ENCODE measurements at regions of chr9 and their contacts with region 1.

Region 1: DNA sequence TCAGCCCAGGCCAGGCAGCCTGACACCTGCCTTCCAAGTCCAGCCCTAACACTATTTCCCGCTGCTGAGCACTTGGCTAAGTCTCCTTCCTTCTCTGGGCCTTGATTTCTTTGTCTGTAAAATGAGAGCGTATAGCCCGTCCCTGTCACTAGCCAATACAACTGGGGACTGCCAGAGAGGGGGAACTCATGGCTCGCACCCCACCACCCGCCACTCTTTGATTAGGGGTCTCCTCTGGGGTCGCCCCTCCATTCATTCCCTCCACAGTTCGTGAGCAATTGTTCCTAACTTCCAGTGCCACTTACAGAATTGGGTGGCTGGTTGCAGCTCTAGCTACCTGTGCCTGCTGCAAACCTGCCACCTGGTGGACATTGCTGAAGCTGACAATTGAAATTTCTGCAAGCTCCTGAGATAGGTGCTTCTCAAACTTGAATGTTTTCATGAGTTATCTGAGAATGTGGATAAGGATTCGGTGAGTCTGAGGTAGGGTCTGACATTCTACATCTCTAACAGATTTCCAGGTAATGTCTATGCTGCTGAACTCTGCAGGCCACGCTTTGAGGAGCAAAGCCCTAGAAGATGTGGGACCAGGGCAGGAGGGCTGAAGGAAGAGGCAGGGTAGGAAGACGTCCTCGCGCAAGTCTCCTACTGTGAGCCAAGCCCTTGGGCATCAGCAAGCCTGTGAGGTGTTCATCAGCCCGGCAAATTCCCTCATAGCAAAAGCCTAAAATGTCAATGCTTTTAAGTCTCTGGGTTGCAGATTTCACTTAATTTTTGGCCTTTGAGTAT is 13.3 kb upstream of the RECK start:
- DNase-seq: peak; percentile 31 to 80 (median 56)
- ATAC-seq: peak; percentile 73 to 80 (median 76)
- H3K4me3 ChIP-seq: no peak overlapping the region
- H3K4me3 Mint-ChIP-seq: no peak overlapping the region
- H3K27ac ChIP-seq: no peak overlapping the region
- H3K27ac Mint-ChIP-seq: peak overlapping the region in 1 of 2 donors; percentile 8
- H3K4me1 ChIP-seq: peaks cover 0 to 2% of the 10 kb centered on the region in 2 experiments
- H3K4me1 Mint-ChIP-seq: peaks cover 0 to 6% (median 1%) of the 10 kb centered on the region in 3 donors
- H3K27me3 ChIP-seq: no peaks in the 10 kb centered on the region
- H3K27me3 Mint-ChIP-seq: peaks cover 6 to 10% of the 10 kb centered on the region in 2 donors

Region 2: GRCh38 chr9:35903049-35903448 is 120.4 kb before region 1 on chr9:
- CTCF ChIA-PET with region 1: interaction called, 6 to 16 read pairs
- POLR2A ChIA-PET with region 1: no interaction called
- DNase-seq: peak in 15 of 35 experiments; percentile 13 to 75 (median 26)
- ATAC-seq: peak; percentile 58 to 66 (median 59)
- H3K4me3 ChIP-seq: no peak overlapping the region
- H3K4me3 Mint-ChIP-seq: no peak overlapping the region
- H3K27ac ChIP-seq: no peak overlapping the region
- H3K27ac Mint-ChIP-seq: no peak overlapping the region
- H3K4me1 ChIP-seq: peaks cover 8 to 33% of the 10 kb centered on the region in 2 experiments
- H3K4me1 Mint-ChIP-seq: peaks cover 23 to 40% (median 28%) of the 10 kb centered on the region in 3 donors
- H3K27me3 ChIP-seq: peaks cover 0 to 7% of the 10 kb centered on the region in 2 experiments
- H3K27me3 Mint-ChIP-seq: peaks cover 4 to 8% of the 10 kb centered on the region in 2 donors

Region 3: GRCh38 chr9:35954942-35955546 is 68.4 kb before region 1 on chr9:
- CTCF ChIA-PET with region 1: interaction called, 11 to 17 read pairs
- POLR2A ChIA-PET with region 1: no interaction called
- DNase-seq: peak in 32 of 35 experiments; percentile 6 to 82 (median 36)
- ATAC-seq: peak; percentile 76 to 80 (median 78)
- H3K4me3 ChIP-seq: no peak overlapping the region
- H3K4me3 Mint-ChIP-seq: no peak overlapping the region
- H3K27ac ChIP-seq: no peak overlapping the region
- H3K27ac Mint-ChIP-seq: peak overlapping the region in 1 of 2 donors; percentile 49
- H3K4me1 ChIP-seq: no peaks in the 10 kb centered on the region
- H3K4me1 Mint-ChIP-seq: peaks cover 4 to 8% (median 6%) of the 10 kb centered on the region in 3 donors
- H3K27me3 ChIP-seq: peaks cover 0 to 11% of the 10 kb centered on the region in 2 experiments
- H3K27me3 Mint-ChIP-seq: peaks cover 0 to 18% of the 10 kb centered on the region in 2 donors

Region 4: DNA sequence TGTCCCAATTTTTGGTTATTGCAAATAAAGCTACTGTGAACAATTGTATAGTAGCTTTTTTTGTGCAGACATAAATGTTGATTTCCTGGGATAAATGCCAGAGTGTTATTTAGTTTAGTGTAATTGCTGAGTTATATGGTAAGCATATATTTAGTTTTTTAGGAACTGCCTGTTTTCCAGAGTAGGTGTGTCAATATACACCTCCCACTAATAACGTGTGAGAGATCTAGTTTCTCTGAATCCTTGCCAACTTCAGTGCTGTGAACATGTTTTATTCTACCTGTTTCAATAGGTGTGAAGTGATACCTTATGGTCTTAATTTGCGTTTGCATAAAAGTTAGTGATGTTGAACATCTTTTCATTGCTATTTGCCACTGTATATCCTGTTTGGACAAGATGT is 56.4 kb before region 1 on chr9:
- CTCF ChIA-PET with region 1: no interaction called
- POLR2A ChIA-PET with region 1: no interaction called
- DNase-seq: no peak
- ATAC-seq: no peak
- H3K4me3 ChIP-seq: no peak overlapping the region
- H3K4me3 Mint-ChIP-seq: no peak overlapping the region
- H3K27ac ChIP-seq: no peak overlapping the region
- H3K27ac Mint-ChIP-seq: no peak overlapping the region
- H3K4me1 ChIP-seq: peaks cover 2 to 5% of the 10 kb centered on the region in 2 experiments
- H3K4me1 Mint-ChIP-seq: peaks cover 0 to 6% (median 4%) of the 10 kb centered on the region in 3 donors
- H3K27me3 ChIP-seq: peaks cover 0 to 21% of the 10 kb centered on the region in 2 experiments
- H3K27me3 Mint-ChIP-seq: peaks cover 19 to 30% of the 10 kb centered on the region in 2 donors

Region 5: DNA sequence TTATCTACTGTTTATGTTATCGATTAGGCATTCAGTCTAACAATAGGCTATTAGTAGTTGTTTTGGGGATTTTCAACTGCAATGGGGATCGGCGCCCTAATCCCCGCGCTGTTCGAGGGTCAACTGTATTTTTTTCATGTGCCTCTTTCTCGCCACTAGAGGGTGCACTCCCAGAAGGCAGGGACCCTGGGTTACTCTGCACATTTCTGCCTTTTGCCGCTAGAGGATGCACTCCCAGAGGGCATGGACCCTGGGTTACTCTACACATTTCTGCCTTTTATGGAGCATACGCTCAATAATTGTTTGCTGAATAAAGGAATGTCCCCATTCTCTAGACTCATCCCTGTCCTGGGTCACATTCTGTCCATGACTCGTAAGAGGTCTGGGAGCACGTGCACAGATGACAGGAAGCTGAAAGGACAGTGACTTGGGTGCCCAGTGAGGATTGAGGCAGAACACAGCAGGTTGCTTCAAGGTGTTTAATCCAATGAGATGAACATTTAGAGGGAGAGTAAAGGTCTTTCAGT is 14.6 kb before region 1 on chr9:
- CTCF ChIA-PET with region 1: interaction called, 3 to 11 read pairs
- POLR2A ChIA-PET with region 1: no interaction called
- DNase-seq: peak; percentile 21 to 84 (median 57)
- ATAC-seq: peak; percentile 90 to 99 (median 98)
- H3K4me3 ChIP-seq: no peak overlapping the region
- H3K4me3 Mint-ChIP-seq: no peak overlapping the region
- H3K27ac ChIP-seq: no peak overlapping the region
- H3K27ac Mint-ChIP-seq: no peak overlapping the region
- H3K4me1 ChIP-seq: peaks cover 0 to 10% of the 10 kb centered on the region in 2 experiments
- H3K4me1 Mint-ChIP-seq: peaks cover 12 to 20% (median 19%) of the 10 kb centered on the region in 3 donors
- H3K27me3 ChIP-seq: peaks cover 0 to 22% of the 10 kb centered on the region in 2 experiments
- H3K27me3 Mint-ChIP-seq: peaks cover 24 to 28% of the 10 kb centered on the region in 2 donors